Colonic mucosa (tissue), 4 donors: ENCODE measurements at regions of chr1 and their contacts with region 1.

Region 1: GRCh38 chr1:213122514-213122929 is 71.5 kb downstream of the RPS6KC1 start:
- DNase-seq: no peak
- H3K4me3 ChIP-seq: no peak overlapping the region
- H3K27ac ChIP-seq: no peak overlapping the region
- H3K4me1 ChIP-seq: no peaks in the 10 kb centered on the region
- H3K27me3 ChIP-seq: no peaks in the 10 kb centered on the region
- CTCF ChIP-seq: peak; percentile 43

Region 2: DNA sequence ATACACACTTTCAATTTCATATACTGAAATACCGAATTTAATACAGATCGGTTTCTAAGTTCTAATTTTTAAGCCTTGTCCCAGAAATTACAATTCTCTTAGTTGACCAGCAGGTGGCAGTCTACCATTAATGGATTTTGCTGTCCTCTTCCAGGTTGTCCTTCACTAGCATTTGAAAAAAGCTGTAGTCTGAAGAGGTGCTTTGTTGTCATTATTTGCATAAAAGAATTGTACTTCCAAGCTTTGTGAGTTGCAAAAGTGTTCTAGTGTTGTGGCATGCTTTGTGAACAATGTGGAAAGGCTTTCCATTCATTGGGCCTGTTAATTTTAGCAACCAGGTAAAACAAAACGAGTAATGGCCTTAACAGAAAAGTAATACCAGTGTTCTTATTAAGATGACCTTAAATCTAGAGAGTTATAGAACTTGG is 122.2 kb after region 1 on chr1:
- intact Hi-C with region 1: loop called (anchors 10 kb)
- DNase-seq: peak; percentile 22
- H3K4me3 ChIP-seq: no peak overlapping the region
- H3K27ac ChIP-seq: no peak overlapping the region
- H3K4me1 ChIP-seq: no peaks in the 10 kb centered on the region
- H3K27me3 ChIP-seq: no peaks in the 10 kb centered on the region
- CTCF ChIP-seq: peak; percentile 65

Region 3: GRCh38 chr1:213564215-213564659 is 441.7 kb after region 1 on chr1:
- intact Hi-C with region 1: loop called (anchors 10 kb)
- DNase-seq: peak; percentile 56
- H3K4me3 ChIP-seq: no peak overlapping the region
- H3K27ac ChIP-seq: no peak overlapping the region
- H3K4me1 ChIP-seq: no peaks in the 10 kb centered on the region
- H3K27me3 ChIP-seq: no peaks in the 10 kb centered on the region
- CTCF ChIP-seq: peak; percentile 46